ENCODE measurements at regions of chr1 and their contacts with region 1.

Region 1: GRCh38 chr1:111719674-111720132 is 19.5 kb downstream of the INKA2 start:
- DNase-seq: no peak
- ATAC-seq: no peak
- H3K4me3 Mint-ChIP-seq: no peak overlapping the region
- H3K27ac Mint-ChIP-seq: no peak overlapping the region
- H3K4me1 Mint-ChIP-seq: peaks cover 20% of the 10 kb centered on the region
- H3K27me3 Mint-ChIP-seq: no peaks in the 10 kb centered on the region
- CTCF ChIP-seq: no peak

Region 2: GRCh38 chr1:111481387-111482221 is 238.1 kb before region 1 on chr1:
- CTCF ChIA-PET with region 1: interaction called, 15 read pairs
- POLR2A ChIA-PET with region 1: interaction called, 3 read pairs
- intact Hi-C with region 1: no loop called
- DNase-seq: peak; percentile 77
- ATAC-seq: peak; percentile 67
- H3K4me3 Mint-ChIP-seq: no peak overlapping the region
- H3K27ac Mint-ChIP-seq: no peak overlapping the region
- H3K4me1 Mint-ChIP-seq: peaks cover 29% of the 10 kb centered on the region
- H3K27me3 Mint-ChIP-seq: no peaks in the 10 kb centered on the region
- CTCF ChIP-seq: peak; percentile 52

Region 3: GRCh38 chr1:111679541-111679940 is 40.2 kb before region 1 on chr1:
- CTCF ChIA-PET with region 1: no interaction called
- POLR2A ChIA-PET with region 1: no interaction called
- intact Hi-C with region 1: no loop called
- DNase-seq: no peak
- ATAC-seq: no peak
- H3K4me3 Mint-ChIP-seq: no peak overlapping the region
- H3K27ac Mint-ChIP-seq: no peak overlapping the region
- H3K4me1 Mint-ChIP-seq: peaks cover 46% of the 10 kb centered on the region
- H3K27me3 Mint-ChIP-seq: no peaks in the 10 kb centered on the region
- CTCF ChIP-seq: no peak

Region 4: GRCh38 chr1:111733183-111733991 is 13.7 kb after region 1 on chr1:
- CTCF ChIA-PET with region 1: interaction called, 47 read pairs
- POLR2A ChIA-PET with region 1: interaction called, 11 read pairs
- intact Hi-C with region 1: no loop called
- DNase-seq: no peak
- ATAC-seq: no peak
- H3K4me3 Mint-ChIP-seq: no peak overlapping the region
- H3K27ac Mint-ChIP-seq: no peak overlapping the region
- H3K4me1 Mint-ChIP-seq: peaks cover 8% of the 10 kb centered on the region
- H3K27me3 Mint-ChIP-seq: peaks cover 12% of the 10 kb centered on the region
- CTCF ChIP-seq: no peak

Region 5: GRCh38 chr1:111747282-111747734 is 27.6 kb after region 1 on chr1:
- CTCF ChIA-PET with region 1: interaction called, 76 read pairs
- POLR2A ChIA-PET with region 1: interaction called, 3 read pairs
- intact Hi-C with region 1: loop called (anchors 5 kb)
- DNase-seq: peak; percentile 89
- ATAC-seq: peak; percentile 92
- H3K4me3 Mint-ChIP-seq: no peak overlapping the region
- H3K27ac Mint-ChIP-seq: no peak overlapping the region
- H3K4me1 Mint-ChIP-seq: no peaks in the 10 kb centered on the region
- H3K27me3 Mint-ChIP-seq: peaks cover 6% of the 10 kb centered on the region
- CTCF ChIP-seq: peak; percentile 80

Region 6: GRCh38 chr1:111769517-111770146 is 49.9 kb after region 1 on chr1:
- CTCF ChIA-PET with region 1: interaction called, 40 read pairs
- POLR2A ChIA-PET with region 1: no interaction called
- intact Hi-C with region 1: no loop called
- DNase-seq: peak; percentile 66
- ATAC-seq: peak; percentile 55
- H3K4me3 Mint-ChIP-seq: no peak overlapping the region
- H3K27ac Mint-ChIP-seq: no peak overlapping the region
- H3K4me1 Mint-ChIP-seq: peaks cover 16% of the 10 kb centered on the region
- H3K27me3 Mint-ChIP-seq: no peaks in the 10 kb centered on the region
- CTCF ChIP-seq: peak; percentile 78

Region 7: DNA sequence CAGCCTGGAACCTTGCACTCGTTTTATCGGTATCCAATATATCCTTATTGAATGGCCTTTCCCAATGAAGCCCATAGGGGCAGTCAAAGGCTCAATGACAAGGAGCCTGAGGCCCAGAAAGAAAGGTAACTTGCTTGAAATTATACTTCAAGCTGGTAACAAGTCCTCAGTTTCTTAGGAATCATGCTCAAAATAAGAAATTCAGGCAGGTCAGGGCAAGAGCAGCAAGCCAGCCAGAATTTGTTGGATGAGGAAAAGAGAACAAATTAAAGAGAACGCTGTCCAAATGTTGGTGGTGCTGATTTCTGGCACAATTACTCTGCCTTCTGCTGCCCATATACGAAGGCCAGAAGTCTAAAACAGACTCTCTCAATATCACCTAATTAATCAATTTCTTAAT is 113.6 kb after region 1 on chr1:
- CTCF ChIA-PET with region 1: no interaction called
- POLR2A ChIA-PET with region 1: no interaction called
- intact Hi-C with region 1: no loop called
- DNase-seq: no peak
- ATAC-seq: no peak
- H3K4me3 Mint-ChIP-seq: no peak overlapping the region
- H3K27ac Mint-ChIP-seq: no peak overlapping the region
- H3K4me1 Mint-ChIP-seq: no peaks in the 10 kb centered on the region
- H3K27me3 Mint-ChIP-seq: peaks cover 14% of the 10 kb centered on the region
- CTCF ChIP-seq: no peak

Measured in activated CD8-positive, alpha-beta T cell treated with anti-CD3 and anti-CD28 coated beads for 36 hours (primary cell).